ENCODE measurements at regions of chr13 and their contacts with region 1.

Region 1: DNA sequence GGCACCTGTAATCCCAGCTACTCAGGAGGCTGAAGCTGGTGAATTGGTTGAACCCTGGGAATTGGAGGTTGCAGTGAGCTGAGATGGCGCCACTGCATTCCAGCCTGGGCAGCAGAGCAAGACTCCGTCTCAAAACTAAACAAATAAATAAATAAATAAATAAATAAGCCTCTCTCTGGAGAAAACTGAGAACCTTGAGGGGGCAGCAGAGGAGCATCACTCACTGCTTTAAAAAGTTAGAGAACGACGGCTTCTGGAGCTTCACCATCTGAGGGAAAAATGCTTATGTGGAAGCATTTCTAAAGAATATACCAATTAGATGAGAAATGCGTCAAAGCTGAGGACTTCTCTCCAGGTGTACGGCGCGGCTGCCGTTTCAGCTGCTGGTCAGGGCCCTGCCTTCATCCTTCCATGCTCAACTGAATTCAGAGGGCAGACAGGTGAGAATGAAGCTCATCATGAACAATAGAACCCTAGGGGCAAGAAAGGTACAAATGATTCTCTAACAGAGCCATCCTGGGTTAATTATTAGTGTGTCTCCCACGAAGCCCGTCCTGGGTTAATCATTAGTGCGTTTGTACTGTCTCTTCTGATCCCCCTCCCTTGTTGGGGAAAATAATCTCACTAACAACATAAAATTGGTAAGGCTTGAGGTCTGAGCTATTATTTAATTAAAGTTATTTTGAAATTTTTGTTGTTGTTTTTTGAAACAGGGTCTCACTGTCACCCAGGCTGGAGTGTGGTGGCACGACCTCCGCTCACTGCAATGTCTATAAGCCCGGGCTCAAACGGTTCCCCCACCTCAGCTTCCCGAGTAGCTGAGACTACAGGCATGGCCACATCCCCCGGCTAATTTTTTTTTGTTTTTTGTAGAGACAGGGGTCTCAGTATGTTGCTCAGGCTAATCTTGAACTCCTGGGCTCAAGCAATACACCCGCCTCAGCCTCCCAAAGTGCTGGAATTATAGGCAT is 80.1 kb downstream of the IPO5 start:
- DNase-seq: peak; percentile 20
- ATAC-seq: peak; percentile 44
- H3K4me3 Mint-ChIP-seq: no peak overlapping the region
- H3K27ac Mint-ChIP-seq: no peak overlapping the region
- H3K4me1 Mint-ChIP-seq: peaks cover 3% of the 10 kb centered on the region; the same call in 1 of the 2 replicates
- H3K27me3 Mint-ChIP-seq: no peaks in the 10 kb centered on the region
- CTCF ChIP-seq: no peak

Region 2: DNA sequence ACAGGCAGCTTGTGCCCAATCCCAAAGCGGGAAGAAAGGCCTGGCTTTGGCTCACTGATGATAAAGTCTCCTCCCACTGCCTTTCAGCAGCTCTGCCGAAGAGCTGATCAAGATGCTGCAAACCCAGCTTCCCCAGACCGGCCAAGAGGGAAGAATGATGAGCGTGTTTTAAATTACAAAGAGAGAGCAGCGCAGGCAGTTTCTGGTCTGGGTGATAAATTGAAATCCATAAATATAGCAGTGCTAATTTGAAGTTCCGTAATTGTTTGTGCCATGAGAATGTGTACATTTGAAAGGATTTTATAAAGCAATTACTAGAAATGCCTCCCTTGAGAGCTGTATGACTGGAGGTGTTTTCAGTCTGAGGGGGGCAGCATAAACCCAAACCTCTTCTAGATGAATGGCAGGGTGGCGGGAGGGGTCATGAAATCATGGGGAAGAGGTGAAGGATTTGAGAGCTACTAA is 371.6 kb after region 1 on chr13:
- CTCF ChIA-PET with region 1: interaction called, 26 read pairs
- POLR2A ChIA-PET with region 1: no interaction called
- DNase-seq: peak; percentile 42
- ATAC-seq: peak; percentile 93
- H3K4me3 Mint-ChIP-seq: no peak overlapping the region
- H3K27ac Mint-ChIP-seq: peak overlapping the region; percentile 38
- H3K4me1 Mint-ChIP-seq: peaks cover 13% of the 10 kb centered on the region
- H3K27me3 Mint-ChIP-seq: no peaks in the 10 kb centered on the region
- CTCF ChIP-seq: no peak

Region 3: DNA sequence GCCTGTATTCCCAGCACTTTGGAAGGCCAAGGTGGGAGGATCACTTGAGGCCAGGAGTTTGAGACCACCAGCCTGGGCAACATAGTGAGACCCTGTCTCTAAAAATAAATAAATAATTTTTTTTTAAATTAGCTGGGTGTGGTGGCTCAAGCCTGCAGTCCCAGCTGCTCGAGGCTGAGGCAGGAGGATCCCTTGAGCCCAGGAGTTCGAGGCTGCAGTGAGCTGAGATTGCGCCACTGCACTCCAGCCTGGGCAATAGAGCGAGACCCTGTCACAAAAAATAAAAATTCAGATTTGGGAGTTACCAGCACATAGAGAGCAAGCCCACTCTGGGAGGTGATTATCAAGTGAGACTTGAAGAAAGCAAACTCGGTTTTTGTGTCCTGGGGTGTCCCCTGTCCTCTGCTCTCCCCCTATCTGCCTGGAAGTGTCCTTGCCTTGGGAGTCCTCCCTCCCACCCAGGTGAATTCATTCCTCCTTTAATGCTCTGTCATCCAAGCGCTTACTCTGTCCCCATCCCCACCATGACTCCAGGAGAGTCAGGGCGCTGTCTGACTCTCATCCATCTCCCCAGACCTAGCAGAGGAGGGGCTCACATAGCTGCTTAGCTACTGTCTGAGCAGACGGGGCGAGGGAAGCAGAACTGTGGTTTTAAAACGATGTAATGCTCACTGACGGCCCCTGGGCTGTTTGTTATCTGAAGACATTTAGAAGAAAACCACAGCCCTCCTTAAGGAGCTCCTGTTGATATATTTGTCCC is 396.6 kb after region 1 on chr13:
- CTCF ChIA-PET with region 1: interaction called, 26 read pairs
- POLR2A ChIA-PET with region 1: interaction called, 3 read pairs
- DNase-seq: no peak
- ATAC-seq: no peak
- H3K4me3 Mint-ChIP-seq: no peak overlapping the region
- H3K27ac Mint-ChIP-seq: peak overlapping the region; percentile 26; the same call in 1 of the 2 replicates
- H3K4me1 Mint-ChIP-seq: peaks cover 6% of the 10 kb centered on the region; the same call in 1 of the 2 replicates
- H3K27me3 Mint-ChIP-seq: no peaks in the 10 kb centered on the region
- CTCF ChIP-seq: no peak